Dorsolateral prefrontal cortex (tissue), 120 donors: ENCODE measurements at regions of chr11 and their contacts with region 1.

Region 1: GRCh38 chr11:112961146-112961668 is at the start of gene NCAM1:
- DNase-seq: peak; percentile 90 to 96 (median 94)
- H3K4me3 ChIP-seq: peak within 1 kb of the TSS; percentile 61 to 93 (median 85)
- H3K27ac ChIP-seq: peak within 1 kb of the TSS; percentile 74 to 98 (median 96)
- H3K27me3 ChIP-seq: no peaks in the 10 kb centered on the region
- CTCF ChIP-seq: peak in 18 of 56 donors; percentile 2 to 32 (median 19)
- total RNA-seq, gene NCAM1: 340 to 857 (median 568) TPM

Region 2: DNA sequence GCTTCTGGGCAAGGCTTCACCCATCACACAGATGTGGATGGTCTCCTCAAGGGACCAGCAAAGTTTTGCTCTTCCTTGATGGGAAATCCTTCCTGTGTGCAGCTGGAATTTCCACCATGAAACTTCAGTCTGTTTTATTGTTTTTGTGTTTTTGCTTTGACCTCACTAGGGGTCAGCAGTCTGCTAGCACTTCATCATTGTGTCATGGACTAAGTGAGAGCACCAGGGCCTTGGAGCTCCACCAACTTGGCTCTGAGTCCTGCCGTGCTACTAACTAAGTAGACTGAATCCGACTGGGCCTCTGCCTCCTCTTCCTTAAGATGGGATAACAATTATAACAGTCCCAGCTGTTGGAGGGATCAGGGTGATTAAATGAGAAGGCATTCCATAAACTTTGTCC is 305.8 kb before region 1 on chr11:
- intact Hi-C with region 1: loop called (anchors 5 kb)
- DNase-seq: peak; percentile 11 to 93 (median 78)
- H3K4me3 ChIP-seq: no peak overlapping the region
- H3K27ac ChIP-seq: peak overlapping the region in 34 of 59 donors; percentile 2 to 90 (median 51)
- H3K27me3 ChIP-seq: no peaks in the 10 kb centered on the region
- CTCF ChIP-seq: peak in 54 of 56 donors; percentile 16 to 76 (median 46)

Region 3: GRCh38 chr11:112666253-112666652 is 295.0 kb before region 1 on chr11:
- intact Hi-C with region 1: no loop called
- DNase-seq: no peak
- H3K4me3 ChIP-seq: no peak overlapping the region
- H3K27ac ChIP-seq: no peak overlapping the region
- H3K27me3 ChIP-seq: no peaks in the 10 kb centered on the region
- CTCF ChIP-seq: no peak

Region 4: GRCh38 chr11:112844517-112844916 is 116.7 kb before region 1 on chr11:
- intact Hi-C with region 1: loop called (anchors 1 to 2 kb)
- DNase-seq: peak; percentile 38 to 94 (median 88)
- H3K4me3 ChIP-seq: peak overlapping the region in 1 of 59 donors; percentile 14
- H3K27ac ChIP-seq: peak overlapping the region; percentile 5 to 99 (median 91)
- H3K27me3 ChIP-seq: no peaks in the 10 kb centered on the region
- CTCF ChIP-seq: peak in 33 of 56 donors; percentile 6 to 56 (median 36)

Region 5: DNA sequence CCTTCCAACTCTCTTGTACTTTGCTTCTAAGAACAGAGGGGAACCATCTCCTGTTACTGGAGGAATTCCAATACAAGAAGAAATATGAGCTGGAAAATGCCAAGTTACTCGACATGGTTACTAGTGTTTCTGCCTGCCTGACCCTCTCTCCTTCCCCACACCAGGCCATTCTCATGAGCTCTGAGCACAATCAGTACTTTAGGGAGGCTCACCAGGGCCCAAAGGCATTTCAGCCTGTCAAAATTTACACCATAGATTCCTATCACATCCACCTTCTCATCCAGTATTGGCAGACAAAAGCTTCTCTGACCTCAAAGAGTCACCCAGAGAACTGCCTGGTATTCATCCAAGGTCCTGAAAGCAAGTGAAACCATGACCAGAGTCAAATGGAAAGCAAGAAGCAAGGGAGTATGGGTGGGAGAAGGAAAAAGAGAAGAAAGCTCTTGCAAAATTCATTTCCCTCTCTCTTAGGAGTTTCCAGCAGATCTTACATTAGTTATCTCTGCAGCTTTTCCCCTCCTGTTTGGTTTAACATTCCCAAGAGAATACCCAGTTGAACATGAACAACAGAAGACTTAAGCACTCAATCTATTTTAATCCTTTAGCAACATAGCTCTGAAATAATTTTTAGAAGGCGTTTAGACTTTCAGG is 58.7 kb before region 1 on chr11:
- intact Hi-C with region 1: loop called in 1 of 2 experiments (anchors 1 kb)
- DNase-seq: no peak
- H3K4me3 ChIP-seq: peak overlapping the region in 7 of 59 donors; percentile 2 to 35 (median 12)
- H3K27ac ChIP-seq: peak overlapping the region; percentile 73 to 99 (median 93)
- H3K27me3 ChIP-seq: no peaks in the 10 kb centered on the region
- CTCF ChIP-seq: no peak

Region 6: DNA sequence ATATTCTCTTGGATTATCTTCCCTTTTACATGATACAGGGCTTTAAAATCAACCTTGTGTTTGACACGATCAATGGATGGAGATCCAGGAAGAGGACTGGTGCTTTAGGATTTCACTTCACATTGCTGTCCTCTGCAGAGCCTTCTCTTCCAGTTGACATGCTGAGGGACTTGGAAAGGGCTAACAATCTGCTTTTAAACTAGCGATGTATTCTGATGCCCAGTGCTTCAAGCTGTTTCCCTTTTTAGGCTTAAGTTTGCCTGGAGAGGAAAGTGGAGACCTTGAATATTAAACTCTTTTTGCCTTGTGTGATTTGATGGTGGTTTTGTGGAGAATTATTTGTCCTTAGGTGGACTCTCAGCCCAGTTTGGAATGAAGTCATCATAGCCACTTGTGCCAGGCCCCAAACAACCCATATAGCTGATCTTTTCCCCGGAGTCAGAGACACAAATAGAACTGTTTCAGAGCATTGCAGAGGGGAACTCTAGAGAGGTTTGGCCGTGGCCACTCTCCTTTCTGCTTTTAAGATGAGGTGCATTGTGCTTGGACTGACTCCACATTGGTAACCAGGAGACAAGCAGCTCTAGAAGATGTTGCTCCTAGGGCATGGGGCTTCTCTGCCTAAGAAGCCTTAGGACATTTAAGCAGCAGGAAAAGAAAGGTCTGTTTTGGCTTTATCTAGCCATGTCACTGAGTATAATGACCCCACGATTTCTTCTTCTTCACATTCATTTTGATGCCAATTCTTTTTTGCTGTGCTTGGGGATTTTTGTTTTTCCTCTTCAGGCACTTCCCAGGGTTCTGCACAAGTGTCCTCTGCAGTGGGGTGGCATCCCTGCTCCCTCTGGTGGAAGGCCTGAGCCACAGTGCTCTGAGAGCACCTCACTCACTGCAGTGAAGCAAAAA is 152.8 kb after region 1 on chr11:
- intact Hi-C with region 1: loop called (anchors 2 kb)
- DNase-seq: peak; percentile 60 to 84 (median 77)
- H3K4me3 ChIP-seq: peak overlapping the region in 4 of 59 donors; percentile 5 to 22 (median 14)
- H3K27ac ChIP-seq: peak overlapping the region in 51 of 59 donors; percentile 14 to 75 (median 57)
- H3K27me3 ChIP-seq: no peaks in the 10 kb centered on the region
- CTCF ChIP-seq: peak; percentile 61 to 94 (median 83)

Region 7: GRCh38 chr11:113261709-113262475 is 300.7 kb after region 1 on chr11:
- intact Hi-C with region 1: loop called in 1 of 2 experiments (anchors 10 kb)
- DNase-seq: peak in 2 of 10 donors; percentile 35 to 51
- H3K4me3 ChIP-seq: no peak overlapping the region
- H3K27ac ChIP-seq: peak overlapping the region in 43 of 59 donors; percentile 0 to 80 (median 55)
- H3K27me3 ChIP-seq: no peaks in the 10 kb centered on the region
- CTCF ChIP-seq: no peak